HepG2 (cell line): ENCODE measurements at regions of chr1 and their contacts with region 1.

Region 1: GRCh38 chr1:235328357-235329138 is at the start of gene GGPS1:
- DNase-seq: peak; percentile 100
- ATAC-seq: peak; percentile 82
- H3K4me3 ChIP-seq: peak within 1 kb of the TSS; percentile 86 to 95 (median 91)
- H3K27ac ChIP-seq: peak within 1 kb of the TSS; percentile 89
- H3K4me1 ChIP-seq: peaks cover 47% of the 10 kb centered on the region
- H3K27me3 ChIP-seq: no peaks in the 10 kb centered on the region; a peak in 1 of 5 replicates
- CTCF ChIP-seq: no peak
- EP300 ChIP-seq: no peak; a peak in 1 of 4 replicates
- POLR2A ChIP-seq: peak; percentile 67 to 94
- RAD21 ChIP-seq: no peak; the same call in 1 of the 2 replicates
- total RNA-seq, gene GGPS1: 42.6 and 59.1 TPM in 2 replicates

Region 2: DNA sequence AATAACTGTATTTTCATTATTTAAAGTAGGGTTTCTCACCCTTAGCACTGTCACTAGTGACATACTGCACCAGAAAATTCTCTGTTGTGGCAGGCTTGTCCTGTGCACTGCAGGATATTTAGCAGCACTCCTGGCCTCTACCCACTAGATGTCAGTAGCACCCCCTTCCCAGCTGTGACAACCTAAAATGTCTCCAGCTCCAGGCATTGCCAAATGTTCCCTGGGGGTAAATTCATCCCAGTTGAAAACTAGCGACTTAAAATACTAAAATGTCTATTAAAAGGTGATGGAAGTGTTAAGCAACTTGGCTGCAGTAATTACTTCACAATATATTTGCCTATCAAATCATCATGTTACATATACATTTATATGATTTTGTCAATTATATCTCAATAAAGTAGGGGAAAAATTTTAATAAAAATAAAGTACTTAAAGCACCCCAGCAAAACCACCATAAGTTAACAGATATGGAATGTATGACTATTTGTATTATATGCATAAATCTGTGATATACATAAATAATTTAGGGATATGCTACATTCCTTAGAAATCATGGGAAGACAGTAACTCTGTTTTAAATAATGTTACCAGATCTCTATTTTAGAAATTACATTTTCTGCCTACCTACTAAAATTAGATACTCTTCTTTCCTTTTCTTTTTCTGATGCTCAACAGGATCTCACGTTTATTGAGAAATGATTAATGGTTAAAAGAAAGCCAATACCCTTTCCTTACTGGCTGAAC is 75.2 kb before region 1 on chr1:
- CTCF ChIA-PET with region 1: no interaction called
- POLR2A ChIA-PET with region 1: no interaction called
- in situ Hi-C with region 1: loop called (anchors 10 kb)
- intact Hi-C with region 1: loop called (anchors 2 kb)
- DNase-seq: peak; percentile 66
- ATAC-seq: peak; percentile 98
- H3K4me3 ChIP-seq: no peak overlapping the region
- H3K27ac ChIP-seq: no peak overlapping the region
- H3K4me1 ChIP-seq: peaks cover 13% of the 10 kb centered on the region
- H3K27me3 ChIP-seq: no peaks in the 10 kb centered on the region
- CTCF ChIP-seq: peak; percentile 87
- EP300 ChIP-seq: no peak
- POLR2A ChIP-seq: no peak
- RAD21 ChIP-seq: peak; percentile 83

Region 3: GRCh38 chr1:235295902-235296376 is 32.6 kb before region 1 on chr1:
- CTCF ChIA-PET with region 1: no interaction called
- POLR2A ChIA-PET with region 1: interaction called, 11 read pairs
- in situ Hi-C with region 1: no loop called
- intact Hi-C with region 1: no loop called
- DNase-seq: peak; percentile 92
- ATAC-seq: peak; percentile 97
- H3K4me3 ChIP-seq: no peak overlapping the region
- H3K27ac ChIP-seq: peak overlapping the region; percentile 57
- H3K4me1 ChIP-seq: peaks cover 71% of the 10 kb centered on the region
- H3K27me3 ChIP-seq: no peaks in the 10 kb centered on the region
- CTCF ChIP-seq: no peak
- EP300 ChIP-seq: peak in 1 of 2 experiments; percentile 85; a peak in 2 of 4 replicates
- POLR2A ChIP-seq: no peak
- RAD21 ChIP-seq: no peak

Region 4: DNA sequence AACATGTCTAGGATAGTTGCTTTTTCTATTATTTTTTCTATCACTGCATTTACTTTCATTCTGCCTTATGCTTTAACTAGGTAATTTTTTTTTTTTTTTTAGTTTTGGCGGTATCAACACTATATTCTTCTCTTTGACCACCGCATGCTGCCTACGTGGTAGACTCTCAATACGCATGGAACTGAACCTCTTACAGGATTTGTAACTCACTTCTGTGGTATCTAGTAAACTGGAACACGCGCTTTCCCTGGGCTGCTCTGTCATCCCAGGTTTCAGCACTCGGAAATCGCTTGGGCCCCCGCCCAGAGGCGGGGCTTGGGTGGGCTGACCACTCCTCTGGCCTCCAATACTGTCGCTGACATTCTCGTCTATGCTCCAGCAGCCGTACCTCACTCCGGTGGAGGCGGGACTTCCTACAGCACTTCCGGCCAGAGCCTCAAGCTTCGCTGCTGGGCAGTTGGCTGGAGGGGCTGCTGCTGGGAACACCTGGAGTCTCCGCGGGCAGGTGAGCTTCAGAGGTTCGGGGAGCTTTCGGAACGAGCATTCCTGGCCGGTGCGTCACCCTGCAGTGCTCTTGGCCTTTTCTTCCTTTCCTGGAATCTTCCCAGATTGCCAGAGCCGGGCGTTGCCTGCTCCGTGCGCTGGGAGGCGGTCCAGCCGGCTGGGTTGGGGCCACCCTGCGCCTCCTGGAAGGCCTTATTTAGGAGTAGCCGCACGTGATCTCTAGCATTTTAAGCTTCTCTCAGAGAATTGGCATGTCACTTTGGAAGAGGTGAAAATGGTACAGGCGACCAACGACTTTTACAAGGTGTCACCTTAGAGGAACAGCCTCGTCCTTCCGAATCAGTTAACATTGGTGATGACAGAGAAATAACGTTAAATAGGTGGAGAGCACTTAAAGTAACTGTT is 38.7 kb after region 1 on chr1 and contains the start of gene TBCE:
- CTCF ChIA-PET with region 1: no interaction called
- POLR2A ChIA-PET with region 1: interaction called, 25 read pairs
- in situ Hi-C with region 1: no loop called
- intact Hi-C with region 1: loop called (anchors 2 kb)
- DNase-seq: peak; percentile 96
- ATAC-seq: peak; percentile 100
- H3K4me3 ChIP-seq: peak within 1 kb of the TSS; percentile 84 to 97 (median 97)
- H3K27ac ChIP-seq: peak within 1 kb of the TSS; percentile 78
- H3K4me1 ChIP-seq: peaks cover 35% of the 10 kb centered on the region
- H3K27me3 ChIP-seq: no peaks in the 10 kb centered on the region; a peak in 1 of 5 replicates
- CTCF ChIP-seq: peak; percentile 29
- EP300 ChIP-seq: no peak
- POLR2A ChIP-seq: peak; percentile 96 to 97
- RAD21 ChIP-seq: peak; percentile 50
- total RNA-seq, gene TBCE: 25.6 and 33.0 TPM in 2 replicates

Region 5: DNA sequence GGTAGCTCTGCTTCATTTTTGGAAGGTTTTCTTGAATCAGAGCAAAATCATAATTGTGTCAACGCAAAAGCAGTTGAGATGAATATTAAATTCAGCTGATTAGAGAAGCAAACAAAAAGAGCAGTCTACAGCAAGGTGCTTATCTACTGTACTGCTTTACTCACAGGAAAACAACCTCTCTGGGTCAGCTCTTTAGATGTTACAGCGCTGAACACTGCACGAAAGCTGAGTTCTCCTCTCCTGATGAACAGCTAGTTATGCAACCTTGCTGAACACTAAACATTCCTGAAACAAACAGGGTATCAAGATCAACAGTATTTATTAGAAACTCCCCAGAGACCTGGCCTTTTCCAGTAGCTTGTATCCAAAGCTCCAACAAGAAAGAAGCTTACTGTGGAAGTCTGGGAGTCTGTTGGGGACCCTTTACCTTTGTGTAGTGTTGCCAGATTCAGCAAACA is 80.0 kb after region 1 on chr1:
- CTCF ChIA-PET with region 1: no interaction called
- POLR2A ChIA-PET with region 1: interaction called, 10 read pairs
- in situ Hi-C with region 1: no loop called
- intact Hi-C with region 1: no loop called
- DNase-seq: peak; percentile 80
- ATAC-seq: peak; percentile 76
- H3K4me3 ChIP-seq: peak overlapping the region; percentile 4 to 38 (median 29); a peak in 3 of 6 replicates
- H3K27ac ChIP-seq: peak overlapping the region; percentile 99
- H3K4me1 ChIP-seq: peaks cover 76% of the 10 kb centered on the region
- H3K27me3 ChIP-seq: no peaks in the 10 kb centered on the region
- CTCF ChIP-seq: no peak
- EP300 ChIP-seq: peak in 1 of 2 experiments; percentile 69; a peak in 2 of 4 replicates
- POLR2A ChIP-seq: peak in 1 of 2 experiments; percentile 19; a peak in 1 of 4 replicates
- RAD21 ChIP-seq: no peak

Region 6: GRCh38 chr1:235513495-235514366 is 185.2 kb after region 1 on chr1:
- CTCF ChIA-PET with region 1: no interaction called
- POLR2A ChIA-PET with region 1: no interaction called
- in situ Hi-C with region 1: no loop called
- intact Hi-C with region 1: no loop called
- DNase-seq: peak; percentile 69
- ATAC-seq: peak; percentile 72; the same call in 2 of the 3 replicates
- H3K4me3 ChIP-seq: no peak overlapping the region
- H3K27ac ChIP-seq: no peak overlapping the region
- H3K4me1 ChIP-seq: no peaks in the 10 kb centered on the region; the same call in 1 of the 2 replicates
- H3K27me3 ChIP-seq: no peaks in the 10 kb centered on the region
- CTCF ChIP-seq: peak; percentile 80
- EP300 ChIP-seq: no peak
- POLR2A ChIP-seq: no peak
- RAD21 ChIP-seq: peak; percentile 46

Region 7: GRCh38 chr1:235809688-235810397 is 481.3 kb after region 1 on chr1:
- CTCF ChIA-PET with region 1: no interaction called
- POLR2A ChIA-PET with region 1: no interaction called
- in situ Hi-C with region 1: no loop called
- intact Hi-C with region 1: no loop called
- DNase-seq: no peak
- ATAC-seq: no peak
- H3K4me3 ChIP-seq: no peak overlapping the region
- H3K27ac ChIP-seq: no peak overlapping the region
- H3K4me1 ChIP-seq: no peaks in the 10 kb centered on the region
- H3K27me3 ChIP-seq: no peaks in the 10 kb centered on the region
- CTCF ChIP-seq: no peak
- EP300 ChIP-seq: no peak
- POLR2A ChIP-seq: no peak
- RAD21 ChIP-seq: no peak